ENCODE measurements at regions of chr22 and their contacts with region 1.

Region 1: GRCh38 chr22:42101199-42101598 is 10.6 kb upstream of the NDUFA6 start:
- DNase-seq: no peak
- H3K4me3 ChIP-seq: no peak overlapping the region
- H3K27me3 ChIP-seq: no peaks in the 10 kb centered on the region
- CTCF ChIP-seq: no peak

Region 2: DNA sequence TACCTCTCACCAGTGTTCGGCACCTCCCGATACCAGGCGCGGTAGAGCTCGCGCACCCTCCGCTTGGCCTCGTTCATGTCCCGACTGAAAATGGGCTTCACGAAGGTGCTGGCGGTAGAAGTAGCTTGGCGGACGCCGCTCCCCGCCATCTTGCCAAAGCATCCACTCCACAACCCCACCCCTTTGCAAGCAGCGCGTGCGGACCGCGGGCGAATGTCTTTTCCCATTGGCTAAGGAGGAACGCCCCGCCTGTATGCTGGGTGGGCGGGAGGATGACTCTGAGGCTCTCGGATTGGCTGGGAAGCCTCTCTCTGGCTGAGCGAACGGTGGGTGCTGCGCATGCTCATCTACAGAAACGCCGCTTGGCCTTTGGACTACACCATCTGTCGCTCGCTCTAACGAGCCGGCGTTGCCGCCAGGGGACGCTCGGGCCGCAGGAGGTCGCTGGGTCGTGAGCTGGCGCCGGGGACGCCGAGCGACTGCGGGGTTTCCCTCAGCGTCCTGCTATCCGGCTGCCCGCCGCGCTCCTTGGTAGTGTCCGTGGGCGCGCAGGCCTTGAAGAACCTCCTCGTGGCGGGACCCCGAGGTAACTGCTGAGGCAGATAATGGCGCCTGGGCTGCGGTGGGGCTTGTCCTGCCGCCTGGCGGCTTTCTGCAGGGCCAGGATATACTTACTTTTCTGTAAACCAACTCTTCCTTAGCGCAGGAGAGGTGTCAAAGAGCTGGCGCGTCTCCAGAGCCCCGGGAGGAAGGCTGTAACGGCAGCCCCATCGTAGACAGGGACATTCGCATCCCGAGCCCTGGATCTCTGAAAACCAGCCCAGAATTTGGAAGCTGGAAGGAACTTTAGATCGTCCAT is 10.4 kb before region 1 on chr22 and contains the start of gene NDUFA6:
- CTCF ChIA-PET with region 1: interaction called, 21 read pairs
- POLR2A ChIA-PET with region 1: no interaction called
- DNase-seq: peak; percentile 97
- H3K4me3 ChIP-seq: peak within 1 kb of the TSS; percentile 59
- H3K27me3 ChIP-seq: no peaks in the 10 kb centered on the region
- CTCF ChIP-seq: peak; percentile 92
- polyA plus RNA-seq, gene NDUFA6: 76.0 and 85.6 TPM in 2 replicates

Region 3: DNA sequence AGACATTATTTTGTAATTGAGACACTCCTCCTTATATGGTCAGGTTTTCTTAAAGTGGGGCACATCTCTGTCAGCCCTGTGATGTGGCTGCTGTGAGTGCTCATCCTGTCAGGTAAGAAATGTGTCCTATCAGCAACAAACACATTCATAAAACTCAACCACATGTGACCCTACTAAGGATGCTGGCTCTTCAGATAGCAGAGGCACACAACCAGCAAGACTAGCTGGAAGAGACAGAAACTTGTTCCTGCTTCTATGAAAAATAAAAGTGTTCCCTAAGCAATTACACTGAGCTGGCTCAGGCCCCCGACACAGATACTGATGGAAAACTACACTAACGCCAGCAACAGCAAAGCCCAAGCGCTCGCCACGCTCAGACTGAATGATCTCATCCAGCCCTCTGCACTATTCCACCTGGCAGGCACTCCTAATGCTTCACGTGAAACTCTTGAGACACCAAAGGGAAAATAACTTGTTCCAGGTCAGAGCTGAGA is 79.2 kb after region 1 on chr22:
- CTCF ChIA-PET with region 1: no interaction called
- POLR2A ChIA-PET with region 1: no interaction called
- DNase-seq: no peak
- H3K4me3 ChIP-seq: no peak overlapping the region
- H3K27me3 ChIP-seq: no peaks in the 10 kb centered on the region
- CTCF ChIP-seq: no peak